OCI-LY7 (cell line): ENCODE measurements at regions of chr11 and their contacts with region 1.

Region 1: GRCh38 chr11:14907411-14908213 is 15.6 kb upstream of the CYP2R1 start:
- DNase-seq: peak; percentile 76
- H3K4me3 ChIP-seq: no peak overlapping the region
- H3K27ac ChIP-seq: no peak overlapping the region
- H3K4me1 ChIP-seq: peaks cover 32% of the 10 kb centered on the region
- CTCF ChIP-seq: peak; percentile 88

Region 2: DNA sequence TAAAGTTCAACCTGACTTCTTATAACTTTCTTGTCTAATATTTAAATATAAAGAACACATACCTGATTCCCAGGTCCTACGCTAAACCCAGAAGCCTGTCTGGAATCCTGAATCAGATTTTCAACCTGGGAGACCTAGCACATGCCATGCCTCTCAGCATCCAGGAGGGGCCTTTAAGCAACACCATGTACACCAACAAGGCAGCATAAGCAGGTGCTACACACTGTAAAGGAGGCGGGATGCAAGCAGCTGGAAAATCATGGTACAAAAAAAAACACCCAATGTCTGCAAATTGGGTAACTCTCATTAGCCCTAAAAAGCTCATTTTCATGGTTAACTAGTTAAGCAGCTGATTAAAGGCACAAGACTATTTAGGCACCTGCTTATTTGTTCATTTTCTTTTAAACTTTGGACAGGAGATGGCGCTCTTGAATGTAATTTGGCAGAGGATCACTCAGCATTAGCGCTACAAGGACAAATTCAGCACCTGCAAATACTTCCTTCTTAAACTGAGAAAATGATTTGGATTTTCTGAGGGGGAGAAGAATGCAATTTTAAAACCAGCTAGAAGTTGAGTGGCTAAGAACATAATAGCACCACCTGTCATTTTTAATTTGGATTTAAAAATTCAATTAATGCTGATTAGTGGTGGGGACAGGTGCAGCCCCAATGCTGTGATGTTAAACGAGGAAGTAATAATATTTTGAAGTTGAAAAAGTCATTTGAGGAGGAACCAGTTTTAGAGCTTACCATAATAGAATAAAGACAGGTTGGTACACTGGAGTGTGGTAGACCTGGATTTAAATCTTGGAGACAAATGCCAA is 1135.2 kb before region 1 on chr11:
- CTCF ChIA-PET with region 1: no interaction called
- POLR2A ChIA-PET with region 1: no interaction called
- intact Hi-C with region 1: loop called (anchors 5 kb)
- DNase-seq: peak; percentile 90
- H3K4me3 ChIP-seq: no peak overlapping the region
- H3K27ac ChIP-seq: peak overlapping the region; percentile 21
- H3K4me1 ChIP-seq: peaks cover 25% of the 10 kb centered on the region
- CTCF ChIP-seq: peak; percentile 98

Region 3: DNA sequence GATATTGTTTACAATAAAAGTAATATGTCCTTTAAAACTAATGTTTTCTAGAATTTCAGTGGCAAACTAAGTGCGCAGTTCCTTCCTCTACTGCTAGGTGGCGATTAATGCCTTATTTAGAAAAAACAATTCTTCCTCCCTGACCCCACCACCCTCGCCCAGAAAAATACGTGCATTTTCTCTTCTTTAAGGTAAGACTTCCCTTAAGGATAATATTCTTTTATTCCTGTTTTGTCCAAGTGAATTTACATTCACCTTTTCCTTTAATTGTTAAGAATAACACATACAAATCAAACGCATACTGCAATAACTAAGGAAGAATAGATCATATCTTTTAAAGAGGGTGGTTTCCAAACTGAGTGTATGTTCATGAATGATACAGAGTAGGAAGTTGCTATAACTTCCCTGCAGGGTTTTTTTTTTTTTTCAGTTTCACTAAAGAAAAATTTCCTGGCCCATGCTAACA is 370.4 kb before region 1 on chr11:
- CTCF ChIA-PET with region 1: no interaction called
- POLR2A ChIA-PET with region 1: interaction called, 4 read pairs
- intact Hi-C with region 1: loop called (anchors 1 kb)
- DNase-seq: peak; percentile 40
- H3K4me3 ChIP-seq: no peak overlapping the region
- H3K27ac ChIP-seq: no peak overlapping the region
- H3K4me1 ChIP-seq: no peaks in the 10 kb centered on the region
- CTCF ChIP-seq: peak; percentile 92

Region 4: DNA sequence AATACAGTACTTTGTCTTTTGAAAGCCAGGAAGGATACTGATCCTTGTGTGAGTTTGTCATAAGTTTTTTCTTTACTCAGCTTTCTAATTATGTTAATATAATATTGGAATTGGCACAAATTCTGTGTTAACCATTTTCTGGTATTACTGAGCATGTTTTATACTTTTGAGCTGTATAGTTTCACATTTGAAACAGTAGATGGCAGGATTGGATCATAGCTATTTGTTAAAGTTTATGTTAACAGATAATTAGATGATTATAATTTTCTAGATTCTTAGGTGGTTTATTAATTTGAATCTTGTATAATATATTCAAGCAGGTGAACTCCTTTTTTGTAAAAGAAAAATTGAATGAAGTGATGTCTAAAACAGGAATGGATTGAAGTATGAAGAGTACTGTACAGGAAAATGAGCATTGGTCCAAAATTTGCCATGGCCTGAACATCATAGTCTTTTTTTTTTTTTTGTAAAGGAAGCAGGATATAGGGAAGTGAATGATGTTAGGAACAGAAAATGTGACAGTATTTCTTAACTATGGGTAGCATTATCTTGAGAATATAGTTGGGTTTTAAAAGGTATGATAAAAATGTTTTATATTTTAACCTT is 117.6 kb before region 1 on chr11:
- CTCF ChIA-PET with region 1: interaction called, 41 read pairs
- POLR2A ChIA-PET with region 1: interaction called, 12 read pairs
- intact Hi-C with region 1: loop called (anchors 1 kb)
- DNase-seq: peak; percentile 31
- H3K4me3 ChIP-seq: no peak overlapping the region
- H3K27ac ChIP-seq: no peak overlapping the region
- H3K4me1 ChIP-seq: no peaks in the 10 kb centered on the region
- CTCF ChIP-seq: peak; percentile 79

Region 5: DNA sequence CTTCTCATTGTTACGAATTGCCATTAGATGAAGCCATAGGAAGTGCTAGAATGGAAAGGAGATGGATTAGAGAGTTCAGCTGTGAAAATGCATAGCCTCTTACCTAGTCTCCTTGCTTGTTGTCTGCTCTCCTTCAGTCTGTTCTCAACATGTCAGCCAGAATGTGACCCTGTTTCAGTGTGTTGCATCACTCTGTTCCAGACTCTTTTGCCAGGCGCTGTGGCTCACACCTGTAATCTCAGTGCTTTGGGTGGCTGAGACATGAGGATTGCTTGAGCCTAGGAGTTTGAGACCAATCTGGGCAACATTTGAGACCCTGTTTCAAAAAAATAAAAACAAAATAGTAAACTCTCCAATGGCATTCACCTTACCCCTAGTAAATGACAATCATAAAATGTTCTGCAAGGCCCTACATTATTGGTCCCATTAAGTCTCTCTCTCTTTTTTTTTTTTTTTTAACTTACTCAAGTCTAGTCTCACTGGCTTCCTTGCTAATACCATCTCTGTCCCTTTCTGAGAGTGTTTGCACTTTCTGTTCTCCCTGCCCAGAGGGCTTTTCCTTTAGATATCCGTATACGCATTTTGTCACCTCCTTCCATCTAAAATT is 54.9 kb before region 1 on chr11:
- CTCF ChIA-PET with region 1: no interaction called
- POLR2A ChIA-PET with region 1: no interaction called
- intact Hi-C with region 1: no loop called
- DNase-seq: no peak
- H3K4me3 ChIP-seq: no peak overlapping the region
- H3K27ac ChIP-seq: no peak overlapping the region
- H3K4me1 ChIP-seq: no peaks in the 10 kb centered on the region
- CTCF ChIP-seq: no peak

Region 6: GRCh38 chr11:15006139-15006759 is 98.6 kb after region 1 on chr11:
- CTCF ChIA-PET with region 1: interaction called, 13 read pairs
- POLR2A ChIA-PET with region 1: no interaction called
- intact Hi-C with region 1: loop called (anchors 1 kb)
- DNase-seq: peak; percentile 59
- H3K4me3 ChIP-seq: no peak overlapping the region
- H3K27ac ChIP-seq: no peak overlapping the region
- H3K4me1 ChIP-seq: no peaks in the 10 kb centered on the region
- CTCF ChIP-seq: peak; percentile 85

Region 7: DNA sequence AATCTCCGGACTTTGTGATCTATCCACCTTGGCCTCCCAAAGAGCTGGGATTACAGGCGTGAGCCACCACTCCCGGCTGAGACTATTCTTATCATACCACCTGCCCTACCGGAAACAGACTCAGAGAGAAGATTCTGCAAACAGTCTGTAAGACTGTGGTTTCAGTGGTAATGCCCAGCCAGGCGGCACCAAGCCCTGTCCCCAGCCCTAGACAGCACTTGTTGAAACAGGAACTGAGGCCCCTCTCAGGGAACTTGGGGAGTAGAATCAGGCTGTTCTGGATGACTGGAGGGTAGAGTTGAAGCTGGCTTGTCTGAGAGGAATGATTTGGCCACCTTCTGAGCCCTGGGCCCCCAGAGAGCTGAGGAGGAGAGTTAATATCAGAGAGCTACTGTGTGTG is 205.8 kb after region 1 on chr11:
- CTCF ChIA-PET with region 1: interaction called, 3 read pairs
- POLR2A ChIA-PET with region 1: no interaction called
- intact Hi-C with region 1: loop called (anchors 2 kb)
- DNase-seq: peak; percentile 87
- H3K4me3 ChIP-seq: peak overlapping the region; percentile 3
- H3K27ac ChIP-seq: peak overlapping the region; percentile 36
- H3K4me1 ChIP-seq: peaks cover 62% of the 10 kb centered on the region
- CTCF ChIP-seq: no peak